ENCODE measurements at regions of chr20 and their contacts with region 1.

Region 1: DNA sequence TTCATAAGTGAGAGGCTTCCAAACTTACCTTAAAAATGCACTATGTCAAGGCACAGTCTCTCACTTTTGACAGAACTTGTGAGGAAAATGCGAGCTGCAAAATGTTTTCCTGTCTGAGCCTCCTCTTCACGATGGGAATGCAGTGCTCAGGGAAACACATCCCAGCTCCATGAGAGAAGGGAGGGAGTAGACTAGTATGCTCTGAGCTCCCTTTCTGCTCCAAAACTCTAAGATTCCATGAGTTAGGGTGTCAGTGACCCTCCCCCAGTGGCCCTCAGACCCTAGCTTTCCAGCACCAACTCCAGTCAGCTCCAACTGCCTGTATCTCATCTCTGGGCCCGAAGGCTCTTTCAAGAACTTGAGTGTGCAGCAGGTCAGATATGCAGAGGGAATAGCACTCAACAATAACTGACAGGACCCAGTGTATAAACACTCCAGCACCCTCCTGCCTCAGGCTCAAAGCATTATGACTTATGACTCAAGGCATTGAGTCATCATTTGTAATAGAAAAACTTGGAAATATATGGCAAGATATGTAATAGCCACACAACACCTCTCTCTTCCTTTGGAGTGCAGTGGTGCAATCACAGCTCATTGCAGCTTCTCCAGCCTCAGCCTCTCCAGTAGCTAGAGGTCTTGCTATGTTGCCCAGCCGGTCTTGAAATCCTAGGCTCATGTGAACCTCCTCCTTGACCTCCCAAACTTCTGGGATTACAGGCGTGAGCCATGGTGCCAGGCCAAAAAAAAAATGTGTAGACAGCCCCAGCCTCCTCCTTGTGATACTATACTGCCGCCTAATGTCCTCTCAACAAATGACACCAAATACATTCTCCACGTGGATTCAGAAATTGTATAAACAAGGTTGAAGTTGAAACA is 16.7 kb upstream of the ENTPD6 start:
- DNase-seq: peak in 1 of 2 experiments; percentile 48
- H3K4me3 ChIP-seq: no peak overlapping the region
- H3K27ac ChIP-seq: no peak overlapping the region
- H3K4me1 ChIP-seq: no peaks in the 10 kb centered on the region
- H3K27me3 ChIP-seq: no peaks in the 10 kb centered on the region
- CTCF ChIP-seq: peak in 2 of 3 experiments; percentile 80 to 83; a peak in 3 of 4 replicates
- EP300 ChIP-seq: no peak
- POLR2A ChIP-seq: no peak
- RAD21 ChIP-seq: peak; percentile 98

Region 2: DNA sequence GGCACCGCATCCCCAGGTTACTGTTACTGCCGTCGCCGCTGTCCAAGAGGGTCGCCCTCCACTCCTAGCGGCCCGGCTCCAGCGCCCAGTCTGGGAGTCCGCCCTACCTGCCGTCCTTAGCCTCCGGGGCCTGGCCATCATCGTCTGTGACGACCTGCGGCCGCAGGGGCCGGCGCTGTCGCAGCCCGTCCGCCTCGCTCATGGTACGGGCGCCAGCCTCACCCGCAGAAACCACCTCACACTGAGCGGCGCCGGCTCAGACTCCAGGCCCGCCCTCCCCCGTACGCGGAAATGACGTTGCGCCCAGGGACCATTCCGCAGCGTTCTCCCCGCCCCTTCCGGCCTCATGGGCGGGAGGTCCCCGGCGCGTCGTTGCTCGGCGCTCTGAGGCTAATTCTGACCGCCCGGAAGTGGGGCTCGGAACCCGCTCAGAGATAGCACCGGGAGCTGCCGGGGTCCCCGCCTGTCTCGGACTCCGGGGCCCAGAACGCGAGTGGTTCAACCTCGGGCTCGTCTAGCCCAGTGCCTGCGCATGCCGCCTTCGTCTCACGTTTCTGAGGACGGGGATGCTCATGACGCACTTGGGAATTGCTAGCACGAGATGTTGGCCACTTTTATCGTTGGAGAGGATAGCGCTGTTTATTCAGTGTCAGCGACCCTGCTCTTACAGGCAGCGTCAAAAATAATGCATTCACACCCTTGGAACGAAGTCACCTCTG is 186.2 kb before region 1 on chr20 and contains the start of gene APMAP:
- CTCF ChIA-PET with region 1: interaction called, 32 read pairs
- POLR2A ChIA-PET with region 1: no interaction called
- DNase-seq: peak; percentile 46 to 95
- H3K4me3 ChIP-seq: peak within 1 kb of the TSS; percentile 75 to 86 (median 84)
- H3K27ac ChIP-seq: no peak within 1 kb of the TSS
- H3K4me1 ChIP-seq: peaks cover 0 to 7% (median 0%) of the 10 kb centered on the region in 4 experiments; a peak in 1 of 7 replicates
- H3K27me3 ChIP-seq: no peaks in the 10 kb centered on the region; a peak in 1 of 7 replicates
- CTCF ChIP-seq: no peak
- EP300 ChIP-seq: no peak
- POLR2A ChIP-seq: peak; percentile 48 to 79; a peak in 2 of 3 replicates
- RAD21 ChIP-seq: no peak
- total RNA-seq, gene APMAP: 63.6 and 66.0 TPM in 2 replicates

Region 3: GRCh38 chr20:25065625-25066338 is 113.0 kb before region 1 on chr20:
- CTCF ChIA-PET with region 1: interaction called, 13 read pairs
- POLR2A ChIA-PET with region 1: no interaction called
- DNase-seq: peak in 1 of 2 experiments; percentile 62
- H3K4me3 ChIP-seq: no peak overlapping the region
- H3K27ac ChIP-seq: no peak overlapping the region
- H3K4me1 ChIP-seq: no peaks in the 10 kb centered on the region; a peak in 1 of 7 replicates
- H3K27me3 ChIP-seq: peaks cover 0 to 23% (median 12%) of the 10 kb centered on the region in 4 experiments; a peak in 5 of 7 replicates
- CTCF ChIP-seq: peak; percentile 16 to 79 (median 78)
- EP300 ChIP-seq: no peak
- POLR2A ChIP-seq: no peak
- RAD21 ChIP-seq: peak; percentile 93 to 94

Region 4: GRCh38 chr20:25139036-25139705 is 39.6 kb before region 1 on chr20:
- CTCF ChIA-PET with region 1: interaction called, 17 read pairs
- POLR2A ChIA-PET with region 1: no interaction called
- DNase-seq: no peak
- H3K4me3 ChIP-seq: no peak overlapping the region
- H3K27ac ChIP-seq: no peak overlapping the region
- H3K4me1 ChIP-seq: no peaks in the 10 kb centered on the region
- H3K27me3 ChIP-seq: no peaks in the 10 kb centered on the region
- CTCF ChIP-seq: peak; percentile 34 to 84 (median 48)
- EP300 ChIP-seq: no peak
- POLR2A ChIP-seq: no peak
- RAD21 ChIP-seq: peak; percentile 36 to 54; a peak in 3 of 4 replicates

Region 5: DNA sequence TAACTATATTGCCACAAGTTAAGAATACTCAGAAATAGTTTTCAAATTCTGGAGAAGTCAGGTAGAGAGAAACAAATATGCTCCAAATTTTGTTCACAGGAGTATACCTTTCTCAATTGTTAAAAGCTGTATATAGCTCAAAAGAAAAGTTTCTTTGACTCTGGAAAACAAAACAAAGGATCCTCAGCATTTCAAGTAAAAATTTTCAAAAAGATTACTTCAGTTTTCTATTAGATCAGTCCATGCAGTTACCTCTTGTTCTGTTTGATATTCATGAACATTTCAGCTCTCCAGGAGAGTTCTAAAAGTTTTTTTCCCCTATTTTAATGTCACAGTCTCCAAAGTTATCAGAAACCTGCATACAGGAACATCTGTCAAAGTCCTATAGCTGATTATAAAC is 13.7 kb before region 1 on chr20:
- CTCF ChIA-PET with region 1: interaction called, 17 read pairs
- POLR2A ChIA-PET with region 1: no interaction called
- DNase-seq: no peak
- H3K4me3 ChIP-seq: no peak overlapping the region
- H3K27ac ChIP-seq: no peak overlapping the region
- H3K4me1 ChIP-seq: no peaks in the 10 kb centered on the region
- H3K27me3 ChIP-seq: no peaks in the 10 kb centered on the region
- CTCF ChIP-seq: no peak
- EP300 ChIP-seq: no peak
- POLR2A ChIP-seq: no peak
- RAD21 ChIP-seq: no peak

Region 6: GRCh38 chr20:25191056-25191455 is 12.3 kb after region 1 on chr20:
- CTCF ChIA-PET with region 1: interaction called, 12 read pairs
- POLR2A ChIA-PET with region 1: no interaction called
- DNase-seq: no peak
- H3K4me3 ChIP-seq: no peak overlapping the region
- H3K27ac ChIP-seq: no peak overlapping the region
- H3K4me1 ChIP-seq: peaks cover 0 to under 1% (median 0%) of the 10 kb centered on the region in 4 experiments; a peak in 2 of 7 replicates
- H3K27me3 ChIP-seq: peaks cover 0 to under 1% (median 0%) of the 10 kb centered on the region in 4 experiments; a peak in 3 of 7 replicates
- CTCF ChIP-seq: no peak
- EP300 ChIP-seq: no peak
- POLR2A ChIP-seq: no peak
- RAD21 ChIP-seq: no peak

Measured in H1 (cell line).